ENCODE measurements at regions of chr4 and their contacts with region 1.

Region 1: DNA sequence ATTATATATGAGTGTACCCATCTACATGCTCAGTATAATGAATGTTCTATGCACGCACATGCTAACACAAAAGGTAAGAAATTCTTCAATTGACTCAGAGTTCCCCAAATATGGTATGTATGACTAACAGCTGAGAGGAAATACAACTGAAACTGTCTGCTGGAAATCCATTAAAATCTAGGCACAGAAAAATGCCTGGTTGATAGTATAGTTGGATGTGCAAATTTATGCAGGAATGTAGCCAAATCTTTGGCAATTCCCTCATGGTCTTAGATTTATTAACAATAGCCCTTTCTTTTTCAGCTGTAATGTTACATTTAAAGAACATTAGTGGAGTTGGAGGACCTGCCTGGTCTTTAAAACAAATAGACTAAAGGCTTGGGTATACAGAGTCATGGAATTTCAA is 5.5 kb downstream of the CAMK2D start:
- DNase-seq: peak in 2 of 5 donors; percentile 13 to 20
- H3K4me3 ChIP-seq: no peak overlapping the region
- H3K27ac ChIP-seq: no peak overlapping the region
- H3K4me1 ChIP-seq: peaks cover 0 to 2% (median 0%) of the 10 kb centered on the region in 3 donors
- H3K27me3 ChIP-seq: no peaks in the 10 kb centered on the region
- CTCF ChIP-seq: no peak

Region 2: DNA sequence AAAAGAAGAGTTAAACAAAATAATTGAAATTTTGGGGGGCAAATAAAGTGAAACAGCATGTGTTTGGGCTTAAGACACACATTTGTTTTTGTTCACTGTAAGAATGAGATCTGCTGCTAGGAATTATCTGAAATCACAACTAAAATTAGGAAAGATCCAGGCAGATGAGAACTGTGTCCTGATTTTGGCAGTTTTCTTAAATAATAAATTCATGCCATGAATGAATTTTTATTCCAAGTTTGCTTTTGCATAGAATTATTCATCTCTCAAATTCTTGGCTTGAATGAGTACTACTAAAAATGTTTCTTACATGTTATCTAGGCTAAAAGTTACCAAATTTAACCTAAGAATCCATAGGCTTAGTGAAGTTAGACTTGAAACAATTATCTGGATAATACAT is 384.9 kb before region 1 on chr4:
- intact Hi-C with region 1: no loop called
- DNase-seq: no peak
- H3K4me3 ChIP-seq: no peak overlapping the region
- H3K27ac ChIP-seq: no peak overlapping the region
- H3K4me1 ChIP-seq: no peaks in the 10 kb centered on the region
- H3K27me3 ChIP-seq: no peaks in the 10 kb centered on the region
- CTCF ChIP-seq: no peak

Region 3: DNA sequence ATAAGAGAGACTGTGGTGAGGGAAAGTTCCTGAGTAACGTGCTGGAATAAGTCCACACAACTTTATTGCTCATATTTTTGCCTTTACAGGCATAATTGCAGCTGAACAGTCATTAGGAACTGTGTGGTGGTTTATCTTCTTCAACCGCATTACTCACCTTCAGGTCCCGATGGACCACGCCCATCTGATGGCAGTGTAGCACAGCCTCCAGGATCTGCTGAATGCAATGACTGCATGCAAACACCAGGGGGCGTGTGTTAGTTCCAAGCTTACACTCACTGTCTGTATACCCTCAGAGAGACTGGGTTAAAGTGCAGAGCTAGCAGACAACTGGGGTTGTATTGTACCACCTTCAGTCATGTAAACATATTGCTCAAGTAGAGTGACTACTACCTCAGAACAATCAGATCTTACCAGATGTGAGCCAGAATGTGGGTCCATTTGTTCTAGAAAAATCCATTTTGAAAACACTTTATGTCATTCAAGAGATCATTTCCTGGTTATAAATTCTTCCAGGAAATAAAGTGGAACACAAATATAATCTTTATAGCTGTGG is 208.4 kb before region 1 on chr4:
- intact Hi-C with region 1: loop called (anchors 10 kb)
- DNase-seq: peak; percentile 88 to 94 (median 91)
- H3K4me3 ChIP-seq: no peak overlapping the region
- H3K27ac ChIP-seq: peak overlapping the region; percentile 27 to 73
- H3K4me1 ChIP-seq: peaks cover 0 to 8% (median 2%) of the 10 kb centered on the region in 3 donors
- H3K27me3 ChIP-seq: no peaks in the 10 kb centered on the region
- CTCF ChIP-seq: peak; percentile 92

Measured in kidney (tissue), 22 donors.